ENCODE measurements at regions of chr14 and their contacts with region 1.

Region 1: GRCh38 chr14:96666088-96666487 is 131.1 kb upstream of the VRK1 start:
- DNase-seq: no peak
- H3K27ac ChIP-seq: no peak overlapping the region
- CTCF ChIP-seq: no peak

Region 2: GRCh38 chr14:96626916-96627315 is 39.2 kb before region 1 on chr14:
- CTCF ChIA-PET with region 1: interaction called, 10 read pairs
- POLR2A ChIA-PET with region 1: no interaction called
- DNase-seq: no peak
- H3K27ac ChIP-seq: no peak overlapping the region
- CTCF ChIP-seq: no peak

Region 3: GRCh38 chr14:97021571-97022171 is 355.6 kb after region 1 on chr14:
- CTCF ChIA-PET with region 1: no interaction called
- POLR2A ChIA-PET with region 1: no interaction called
- DNase-seq: peak; percentile 9
- H3K27ac ChIP-seq: no peak overlapping the region
- CTCF ChIP-seq: no peak